MCF 10A (cell line): ENCODE measurements at regions of chr11 and their contacts with region 1.

Region 1: DNA sequence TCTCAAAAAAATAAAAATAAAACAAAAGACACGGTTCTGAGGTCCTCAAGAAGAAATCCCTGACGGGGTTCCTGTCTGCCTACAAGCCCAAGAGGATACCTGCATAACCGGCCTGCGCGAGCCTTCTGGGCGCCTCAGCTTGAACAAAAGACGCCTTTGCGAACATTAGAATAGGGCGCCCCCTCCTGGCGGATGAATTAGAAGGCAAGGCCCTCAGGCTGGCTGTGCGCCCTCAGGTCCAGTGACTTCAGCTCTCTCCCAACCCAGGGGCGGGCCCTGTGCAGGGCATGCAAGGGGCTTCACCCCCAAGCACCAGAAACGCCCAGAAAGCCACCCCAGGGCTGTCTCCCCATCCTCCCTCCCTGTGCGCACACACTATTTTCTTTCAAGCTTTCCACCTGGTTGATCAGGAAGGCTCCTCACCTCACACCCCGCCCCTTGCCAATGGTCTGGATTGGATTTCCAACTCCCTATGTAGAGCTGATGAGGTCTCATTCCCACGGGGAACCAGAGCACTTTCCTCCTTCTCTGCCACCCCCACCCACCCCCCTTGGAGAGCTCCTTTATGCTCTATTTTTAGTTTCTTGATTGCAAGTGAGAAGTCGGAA is 273.3 kb downstream of the BUD13 start:
- DNase-seq: peak; percentile 78
- H3K4me3 Mint-ChIP-seq: no peak overlapping the region
- H3K27ac Mint-ChIP-seq: no peak overlapping the region
- H3K4me1 Mint-ChIP-seq: no peaks in the 10 kb centered on the region
- H3K27me3 Mint-ChIP-seq: peaks cover 32% of the 10 kb centered on the region
- CTCF ChIP-seq: peak; percentile 63

Region 2: GRCh38 chr11:115334932-115335788 is 1164.3 kb before region 1 on chr11:
- CTCF ChIA-PET with region 1: no interaction called
- POLR2A ChIA-PET with region 1: no interaction called
- intact Hi-C with region 1: loop called (anchors 10 kb)
- DNase-seq: peak; percentile 31
- H3K4me3 Mint-ChIP-seq: no peak overlapping the region
- H3K27ac Mint-ChIP-seq: no peak overlapping the region
- H3K4me1 Mint-ChIP-seq: no peaks in the 10 kb centered on the region
- H3K27me3 Mint-ChIP-seq: peaks cover 35% of the 10 kb centered on the region
- CTCF ChIP-seq: peak; percentile 48

Region 3: DNA sequence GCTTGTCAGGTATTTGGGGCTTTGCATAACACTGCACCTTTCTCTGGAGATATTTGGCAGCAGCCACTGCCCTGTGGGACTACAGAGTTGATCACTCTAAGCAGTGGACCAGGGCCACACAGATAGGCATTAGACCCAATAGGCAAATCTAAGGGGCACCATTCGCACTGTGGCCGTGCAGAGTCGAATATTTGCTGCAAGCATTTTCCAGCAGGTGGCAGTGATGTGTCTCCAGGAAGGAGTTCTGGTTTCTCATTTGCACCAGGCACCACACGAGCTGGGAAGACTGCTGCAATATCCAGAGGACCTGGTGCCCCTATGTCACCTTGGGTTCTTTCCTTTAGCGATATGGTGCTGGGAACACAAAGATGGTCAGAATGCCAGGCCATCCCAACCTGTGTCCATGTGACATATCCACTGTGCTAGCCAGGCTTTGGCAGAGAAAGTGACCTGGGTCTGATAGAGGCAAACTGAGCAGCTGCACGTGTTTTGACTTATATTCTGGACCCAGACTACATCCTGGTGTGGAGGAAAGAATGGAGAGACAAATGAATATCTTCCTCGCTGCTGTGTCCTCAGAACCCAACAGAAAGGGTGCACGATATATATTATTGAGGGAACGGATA is 45.4 kb before region 1 on chr11:
- CTCF ChIA-PET with region 1: no interaction called
- POLR2A ChIA-PET with region 1: no interaction called
- intact Hi-C with region 1: loop called (anchors 1 kb)
- DNase-seq: peak; percentile 43
- H3K4me3 Mint-ChIP-seq: no peak overlapping the region
- H3K27ac Mint-ChIP-seq: no peak overlapping the region
- H3K4me1 Mint-ChIP-seq: no peaks in the 10 kb centered on the region
- H3K27me3 Mint-ChIP-seq: no peaks in the 10 kb centered on the region
- CTCF ChIP-seq: peak; percentile 39

Region 4: GRCh38 chr11:116482716-116483115 is 16.8 kb before region 1 on chr11:
- CTCF ChIA-PET with region 1: no interaction called
- POLR2A ChIA-PET with region 1: no interaction called
- intact Hi-C with region 1: no loop called
- DNase-seq: no peak
- H3K4me3 Mint-ChIP-seq: no peak overlapping the region
- H3K27ac Mint-ChIP-seq: no peak overlapping the region
- H3K4me1 Mint-ChIP-seq: no peaks in the 10 kb centered on the region
- H3K27me3 Mint-ChIP-seq: peaks cover 26% of the 10 kb centered on the region
- CTCF ChIP-seq: no peak